ENCODE measurements at regions of chr1 and their contacts with region 1.

Region 1: DNA sequence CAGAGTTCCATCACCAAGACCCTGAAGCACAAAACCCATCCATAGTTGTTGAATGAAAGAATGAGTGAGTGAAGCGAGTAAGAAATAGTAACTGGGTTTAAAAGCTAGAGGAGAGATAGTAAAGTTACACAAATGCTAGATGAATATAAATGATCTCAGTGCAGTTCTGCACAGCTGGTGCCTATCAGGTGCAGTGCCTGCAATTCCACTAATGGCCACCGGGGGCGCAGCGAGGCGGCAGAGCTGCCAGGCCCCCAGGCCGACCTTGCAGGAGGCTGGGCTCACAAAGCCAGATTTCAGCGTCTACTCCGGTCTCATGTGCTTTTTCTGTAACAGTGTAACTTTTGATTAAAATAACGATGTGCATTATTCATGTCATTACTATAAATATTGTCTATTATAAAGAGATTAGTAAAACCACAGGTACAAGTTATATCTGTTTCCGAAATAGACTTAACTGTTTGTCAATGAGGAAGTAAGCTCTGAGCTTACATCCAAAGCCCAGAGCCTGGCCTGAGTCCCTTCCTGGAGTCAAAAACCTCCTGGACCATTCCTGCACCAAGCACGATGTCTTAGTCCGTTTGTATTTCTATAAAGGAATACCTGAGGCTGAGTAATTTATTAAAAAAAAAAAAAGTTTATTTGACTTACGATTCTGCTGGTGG is 477.6 kb downstream of the NPHP4 start:
- DNase-seq: peak; percentile 67 to 96 (median 90)
- ATAC-seq: peak; percentile 93
- H3K4me3 ChIP-seq: no peak overlapping the region
- H3K27ac ChIP-seq: no peak overlapping the region
- H3K4me1 ChIP-seq: 0 out of 5 replicates have a peak, but pooled peaks cover 0 to 2% of the 10 kb centered on the region in 2 experiments
- H3K27me3 ChIP-seq: peaks cover 0 to 9% of the 10 kb centered on the region in 2 experiments; a peak in 1 of 5 replicates
- CTCF ChIP-seq: peak; percentile 89 to 99 (median 93)
- EP300 ChIP-seq: no peak
- POLR2A ChIP-seq: no peak
- RAD21 ChIP-seq: peak in 1 of 2 experiments; percentile 52; a peak in 2 of 4 replicates

Region 2: GRCh38 chr1:5448486-5448885 is 66.2 kb before region 1 on chr1:
- CTCF ChIA-PET with region 1: no interaction called
- POLR2A ChIA-PET with region 1: no interaction called
- in situ Hi-C with region 1: no loop called
- intact Hi-C with region 1: no loop called
- DNase-seq: no peak
- ATAC-seq: no peak
- H3K4me3 ChIP-seq: no peak overlapping the region
- H3K27ac ChIP-seq: no peak overlapping the region
- H3K4me1 ChIP-seq: no peaks in the 10 kb centered on the region
- H3K27me3 ChIP-seq: no peaks in the 10 kb centered on the region; a peak in 1 of 5 replicates
- CTCF ChIP-seq: no peak
- EP300 ChIP-seq: no peak
- POLR2A ChIP-seq: no peak
- RAD21 ChIP-seq: no peak

Region 3: GRCh38 chr1:5597991-5598823 is 83.6 kb after region 1 on chr1:
- CTCF ChIA-PET with region 1: no interaction called
- POLR2A ChIA-PET with region 1: no interaction called
- in situ Hi-C with region 1: no loop called
- intact Hi-C with region 1: loop called (anchors 10 kb)
- DNase-seq: no peak
- ATAC-seq: peak; percentile 77
- H3K4me3 ChIP-seq: no peak overlapping the region
- H3K27ac ChIP-seq: no peak overlapping the region
- H3K4me1 ChIP-seq: no peaks in the 10 kb centered on the region
- H3K27me3 ChIP-seq: peaks cover 0 to 25% of the 10 kb centered on the region in 2 experiments; a peak in 2 of 5 replicates
- CTCF ChIP-seq: peak; percentile 25 to 56 (median 36); a peak in 5 of 6 replicates
- EP300 ChIP-seq: no peak
- POLR2A ChIP-seq: no peak
- RAD21 ChIP-seq: peak in 1 of 2 experiments; percentile 12; a peak in 1 of 4 replicates

Region 4: DNA sequence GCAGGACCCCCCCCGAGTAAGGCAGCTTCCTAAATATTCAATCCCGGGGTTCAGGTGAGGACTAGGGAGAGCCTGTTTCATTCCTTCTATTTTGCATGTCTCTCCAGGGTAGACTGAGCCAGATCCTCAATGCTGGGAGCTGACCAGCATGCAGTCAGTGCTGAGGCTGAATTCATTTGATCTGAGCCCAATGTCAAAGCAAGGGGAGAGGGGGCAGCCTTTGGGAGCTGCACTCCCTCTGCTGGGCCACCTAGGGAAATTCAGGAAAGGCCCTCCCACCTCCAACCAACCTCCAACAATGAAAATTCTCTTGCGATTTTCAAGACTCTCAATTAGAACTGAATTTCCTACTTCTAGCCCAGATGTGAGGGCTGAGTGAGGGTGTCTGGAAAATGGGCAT is 106.3 kb after region 1 on chr1:
- CTCF ChIA-PET with region 1: no interaction called
- POLR2A ChIA-PET with region 1: no interaction called
- in situ Hi-C with region 1: no loop called
- intact Hi-C with region 1: loop called (anchors 1 kb)
- DNase-seq: peak; percentile 37 to 60 (median 54)
- ATAC-seq: peak; percentile 93
- H3K4me3 ChIP-seq: no peak overlapping the region
- H3K27ac ChIP-seq: no peak overlapping the region
- H3K4me1 ChIP-seq: no peaks in the 10 kb centered on the region
- H3K27me3 ChIP-seq: peaks cover 10 to 46% of the 10 kb centered on the region in 2 experiments; a peak in 4 of 5 replicates
- CTCF ChIP-seq: peak; percentile 63 to 76 (median 67)
- EP300 ChIP-seq: no peak
- POLR2A ChIP-seq: no peak
- RAD21 ChIP-seq: peak in 1 of 2 experiments; percentile 53; a peak in 2 of 4 replicates

Region 5: GRCh38 chr1:5745776-5746610 is 231.3 kb after region 1 on chr1:
- CTCF ChIA-PET with region 1: interaction called, 9 read pairs
- POLR2A ChIA-PET with region 1: no interaction called
- in situ Hi-C with region 1: loop called (anchors 5 kb)
- intact Hi-C with region 1: loop called (anchors 1 kb)
- DNase-seq: peak; percentile 81 to 93 (median 92)
- ATAC-seq: peak; percentile 98
- H3K4me3 ChIP-seq: no peak overlapping the region
- H3K27ac ChIP-seq: no peak overlapping the region
- H3K4me1 ChIP-seq: peaks cover 0 to 17% of the 10 kb centered on the region in 2 experiments; a peak in 1 of 5 replicates
- H3K27me3 ChIP-seq: peaks cover 5 to 46% of the 10 kb centered on the region in 2 experiments; a peak in 3 of 5 replicates
- CTCF ChIP-seq: peak; percentile 97 to 98 (median 98)
- EP300 ChIP-seq: no peak
- POLR2A ChIP-seq: no peak
- RAD21 ChIP-seq: peak; percentile 74 to 94

Region 6: DNA sequence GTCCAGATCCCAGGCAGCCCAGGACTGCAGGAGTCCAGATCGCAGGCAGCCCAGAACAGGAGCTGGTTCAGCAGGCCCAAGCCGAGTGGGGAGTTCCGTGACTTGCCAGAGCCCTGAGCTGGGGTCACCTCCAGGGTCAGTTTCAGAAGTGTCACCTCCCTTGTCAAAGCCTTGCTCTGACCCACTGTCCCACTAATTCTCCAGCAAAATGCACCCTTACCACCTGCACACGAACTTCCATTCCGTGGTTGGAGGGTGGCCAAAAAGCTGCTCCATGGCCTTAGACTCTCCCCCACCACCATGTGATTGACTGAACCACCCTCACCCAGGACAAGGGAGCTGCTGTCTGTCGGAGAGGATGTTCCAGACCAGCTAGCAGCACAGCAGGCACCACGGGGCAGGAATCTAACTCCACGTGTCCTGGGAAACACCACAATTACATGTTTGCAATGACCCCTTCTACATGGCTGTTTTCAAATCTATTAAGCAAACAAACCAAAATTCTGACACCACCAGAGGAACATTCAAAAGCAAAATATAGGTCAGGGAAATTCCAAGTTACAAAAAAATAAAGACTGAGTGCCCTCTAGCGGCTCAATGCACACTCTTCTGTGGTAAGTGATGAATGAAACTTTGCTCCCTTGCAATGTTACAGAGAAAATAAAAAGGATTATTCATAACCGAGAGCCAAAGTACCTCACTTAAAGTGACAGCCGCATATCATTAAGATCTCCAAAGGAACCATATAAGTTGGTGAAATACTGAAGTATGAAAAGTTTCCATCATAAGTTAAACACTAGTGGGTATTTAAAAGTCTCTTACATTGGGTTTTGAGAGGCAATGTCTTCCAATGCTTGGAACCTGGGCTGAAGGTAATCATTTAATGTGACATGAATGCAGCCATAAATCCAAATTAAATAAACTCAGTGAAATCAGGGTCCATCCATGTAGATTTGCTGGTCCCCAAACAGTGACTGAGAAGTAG is 401.2 kb after region 1 on chr1:
- CTCF ChIA-PET with region 1: interaction called, 3 read pairs
- POLR2A ChIA-PET with region 1: no interaction called
- in situ Hi-C with region 1: loop called (anchors 10 kb)
- intact Hi-C with region 1: loop called (anchors 2 kb)
- DNase-seq: peak; percentile 53 to 66 (median 57)
- ATAC-seq: peak; percentile 57
- H3K4me3 ChIP-seq: no peak overlapping the region
- H3K27ac ChIP-seq: peak overlapping the region; percentile 84; the same call in 1 of the 3 replicates
- H3K4me1 ChIP-seq: peaks cover 17 to 29% of the 10 kb centered on the region in 2 experiments
- H3K27me3 ChIP-seq: no peaks in the 10 kb centered on the region
- CTCF ChIP-seq: peak; percentile 52 to 90 (median 84); a peak in 5 of 6 replicates
- EP300 ChIP-seq: no peak
- POLR2A ChIP-seq: no peak
- RAD21 ChIP-seq: peak; percentile 60 to 78

Region 7: GRCh38 chr1:5975133-5975880 is 460.7 kb after region 1 on chr1:
- CTCF ChIA-PET with region 1: interaction called, 4 read pairs
- POLR2A ChIA-PET with region 1: no interaction called
- in situ Hi-C with region 1: no loop called
- intact Hi-C with region 1: loop called (anchors 10 kb)
- DNase-seq: peak in 1 of 4 experiments; percentile 29
- ATAC-seq: peak; percentile 82
- H3K4me3 ChIP-seq: no peak overlapping the region
- H3K27ac ChIP-seq: no peak overlapping the region
- H3K4me1 ChIP-seq: peaks cover 0 to 13% of the 10 kb centered on the region in 2 experiments; a peak in 3 of 5 replicates
- H3K27me3 ChIP-seq: no peaks in the 10 kb centered on the region
- CTCF ChIP-seq: peak; percentile 59 to 68 (median 66)
- EP300 ChIP-seq: no peak
- POLR2A ChIP-seq: no peak
- RAD21 ChIP-seq: peak; percentile 26 to 58; a peak in 3 of 4 replicates